Dendritic cell treated with granulocyte-macrophage colony-stimulating factor and Interleukin-4, amounts not matched to agents 40 ng/mL and 50 ng/mL, for 4 days (primary cell): ENCODE measurements at regions of chr13 and their contacts with region 1.

Region 1: DNA sequence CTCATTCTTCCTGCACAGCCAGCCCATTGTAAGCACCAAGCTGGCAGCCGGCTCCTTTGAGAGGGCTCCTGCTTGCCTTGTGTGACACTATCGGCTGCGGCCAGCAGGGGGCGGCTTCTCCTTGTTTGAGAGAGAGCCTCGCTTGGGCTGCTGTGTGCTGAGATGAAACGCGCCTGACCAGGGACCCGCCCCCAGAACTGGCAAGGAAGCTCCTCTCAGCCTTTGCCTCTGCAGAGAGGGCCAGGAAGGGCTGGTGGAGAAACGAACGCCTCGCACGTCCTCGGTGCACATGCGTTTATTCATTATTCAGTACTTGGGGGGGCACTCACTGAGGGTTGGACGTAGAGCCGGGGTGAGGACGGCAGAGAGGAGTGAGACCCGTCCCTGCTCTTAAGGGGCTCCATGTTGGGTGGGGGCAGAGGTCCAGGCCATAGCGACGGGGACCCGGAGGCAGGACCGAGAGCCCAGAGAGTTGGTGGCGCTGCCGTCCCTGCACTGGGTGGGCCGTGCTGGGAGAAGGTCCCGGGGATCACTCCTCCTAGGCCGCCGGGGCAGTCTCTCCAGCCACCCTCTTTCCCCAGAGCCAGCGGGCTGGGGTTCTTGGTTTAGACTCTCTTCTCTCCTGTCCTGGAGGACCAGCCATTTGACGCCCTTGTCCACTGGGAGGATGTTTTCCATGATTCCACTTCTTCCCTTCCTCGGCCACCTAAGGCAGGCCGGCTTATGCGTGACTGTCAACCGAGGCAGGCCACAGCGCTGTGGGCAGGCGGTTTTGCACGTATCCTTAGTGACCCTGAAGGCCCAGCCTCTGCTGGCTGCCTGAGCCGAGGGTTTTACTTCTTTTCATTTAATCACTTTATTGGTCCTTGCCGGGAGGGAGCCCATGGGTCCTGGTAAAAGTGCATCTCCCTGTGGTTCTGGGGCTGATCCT is 174.5 kb downstream of the KATNAL1 start:
- H3K4me3 Mint-ChIP-seq: no peak overlapping the region
- H3K27ac Mint-ChIP-seq: no peak overlapping the region
- H3K4me1 Mint-ChIP-seq: peaks cover 6% of the 10 kb centered on the region
- H3K27me3 Mint-ChIP-seq: no peaks in the 10 kb centered on the region

Region 2: DNA sequence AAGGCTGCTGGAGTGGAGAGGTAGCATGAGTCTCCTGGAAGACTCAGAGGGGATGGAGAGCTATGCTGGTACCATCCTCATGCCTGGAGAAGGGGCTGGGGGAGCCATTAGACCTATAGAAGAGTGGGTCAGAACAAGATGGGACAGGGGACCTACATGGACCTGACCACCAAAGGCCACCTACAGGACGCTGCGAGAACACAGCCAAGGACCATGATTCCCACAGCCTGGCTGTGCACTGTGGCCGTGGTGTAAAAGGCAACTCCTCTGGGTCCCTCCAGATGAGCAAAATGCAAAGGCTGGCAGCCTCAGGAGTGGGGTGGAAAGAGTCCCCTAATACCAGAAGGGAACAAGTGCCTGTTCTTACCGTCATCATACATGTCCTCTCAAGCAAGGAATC is 753.6 kb before region 1 on chr13:
- intact Hi-C with region 1: no loop called
- H3K4me3 Mint-ChIP-seq: no peak overlapping the region
- H3K27ac Mint-ChIP-seq: no peak overlapping the region
- H3K4me1 Mint-ChIP-seq: no peaks in the 10 kb centered on the region
- H3K27me3 Mint-ChIP-seq: no peaks in the 10 kb centered on the region

Region 3: DNA sequence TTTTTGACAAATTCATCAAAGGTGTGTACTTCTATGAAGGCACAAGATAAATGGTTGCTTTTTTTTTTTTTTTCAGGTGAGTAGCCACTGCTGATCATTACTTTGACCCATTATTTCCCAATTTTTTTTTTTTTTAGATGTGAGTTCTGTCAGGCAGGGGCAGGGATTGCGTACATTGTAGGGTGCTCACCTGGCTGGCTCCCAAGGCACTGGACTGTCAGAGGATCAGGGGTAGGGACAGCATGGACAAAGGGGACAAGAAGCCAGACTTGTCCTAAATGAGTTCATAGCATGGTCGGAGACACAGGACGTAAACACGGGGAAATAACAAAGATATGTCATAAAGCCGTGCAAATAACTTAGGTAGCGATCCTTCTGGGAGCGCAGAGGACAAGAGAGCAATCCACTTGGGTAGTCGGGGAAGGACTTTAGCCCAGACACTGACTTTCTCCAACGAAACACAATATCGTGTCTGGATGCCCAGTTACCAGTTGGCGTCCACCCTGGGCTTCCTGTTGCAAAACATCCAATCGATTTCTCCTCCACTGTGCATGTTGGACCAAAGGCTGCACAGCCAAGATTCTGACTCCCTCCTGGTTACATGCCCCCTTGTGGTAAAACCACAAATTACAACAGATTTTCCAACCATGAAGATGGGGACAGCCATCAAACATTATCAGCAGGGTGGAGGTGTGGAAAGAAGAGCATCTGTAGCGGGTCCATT is 201.9 kb after region 1 on chr13:
- intact Hi-C with region 1: loop called (anchors 2 kb)
- H3K4me3 Mint-ChIP-seq: no peak overlapping the region
- H3K27ac Mint-ChIP-seq: no peak overlapping the region
- H3K4me1 Mint-ChIP-seq: peaks cover 8% of the 10 kb centered on the region
- H3K27me3 Mint-ChIP-seq: no peaks in the 10 kb centered on the region